ENCODE measurements at regions of chr12 and their contacts with region 1.

Region 1: GRCh38 chr12:96516472-96517430 is 27.4 kb downstream of the CFAP54 start:
- DNase-seq: peak in 1 of 2 donors; percentile 82
- H3K4me3 ChIP-seq: no peak overlapping the region
- H3K27ac ChIP-seq: no peak overlapping the region
- H3K4me1 ChIP-seq: no peaks in the 10 kb centered on the region
- H3K27me3 ChIP-seq: no peaks in the 10 kb centered on the region
- CTCF ChIP-seq: peak; percentile 49 to 51 (median 50)

Region 2: GRCh38 chr12:95130096-95130495 is 1386.7 kb before region 1 on chr12:
- intact Hi-C with region 1: no loop called
- DNase-seq: no peak
- H3K4me3 ChIP-seq: no peak overlapping the region
- H3K27ac ChIP-seq: no peak overlapping the region
- H3K4me1 ChIP-seq: peaks cover 0 to 2% of the 10 kb centered on the region in 2 donors
- H3K27me3 ChIP-seq: no peaks in the 10 kb centered on the region
- CTCF ChIP-seq: no peak

Region 3: DNA sequence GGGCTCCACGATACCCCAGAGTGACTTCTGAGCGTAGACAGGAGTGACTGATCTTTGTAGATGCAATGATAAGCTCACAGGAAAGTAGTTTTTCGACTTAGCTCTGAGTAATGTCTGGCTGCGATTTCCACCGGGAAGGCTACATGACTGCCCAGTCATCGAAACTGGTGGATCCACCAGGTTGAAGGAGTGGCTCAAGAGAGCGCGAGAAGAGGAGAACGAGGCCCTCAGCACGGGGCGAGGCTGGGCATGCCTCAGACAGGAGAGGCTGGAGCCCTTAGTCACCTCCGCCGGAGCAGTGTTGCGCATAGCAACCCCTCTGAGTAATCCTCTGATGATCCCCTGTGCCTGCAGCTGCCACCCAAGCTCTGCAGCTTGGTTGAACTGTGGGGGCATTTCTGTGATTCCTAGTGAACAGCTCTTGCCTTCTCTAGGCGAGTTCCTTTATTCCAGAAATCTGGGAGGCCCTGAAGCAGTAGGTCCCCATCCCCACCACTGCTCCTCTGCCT is 297.0 kb before region 1 on chr12:
- intact Hi-C with region 1: loop called (anchors 5 kb)
- DNase-seq: peak in 1 of 2 donors; percentile 63
- H3K4me3 ChIP-seq: no peak overlapping the region
- H3K27ac ChIP-seq: no peak overlapping the region
- H3K4me1 ChIP-seq: peaks cover 0 to 8% of the 10 kb centered on the region in 2 donors
- H3K27me3 ChIP-seq: no peaks in the 10 kb centered on the region
- CTCF ChIP-seq: no peak

Region 4: DNA sequence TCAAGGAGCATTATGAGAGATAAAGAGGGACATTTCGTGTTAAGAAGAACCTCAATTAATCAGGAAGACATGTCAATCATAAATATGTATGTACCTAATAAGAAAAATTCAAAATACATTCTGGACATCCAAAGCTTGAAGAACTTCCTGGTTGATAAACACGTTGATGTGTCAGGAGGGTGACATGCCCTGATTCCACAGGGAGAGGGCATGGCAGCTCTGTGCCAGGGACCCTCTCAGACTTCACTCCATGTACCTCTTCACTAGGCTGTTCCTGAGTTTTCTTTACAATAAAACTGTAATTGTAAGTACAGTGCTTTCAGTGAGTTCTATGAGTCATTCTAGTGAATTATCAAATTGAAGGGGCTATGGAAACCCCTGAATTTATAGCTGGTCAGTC is 136.1 kb after region 1 on chr12:
- intact Hi-C with region 1: no loop called
- DNase-seq: no peak
- H3K4me3 ChIP-seq: no peak overlapping the region
- H3K27ac ChIP-seq: no peak overlapping the region
- H3K4me1 ChIP-seq: no peaks in the 10 kb centered on the region
- H3K27me3 ChIP-seq: no peaks in the 10 kb centered on the region
- CTCF ChIP-seq: no peak